Dendritic cell treated with granulocyte-macrophage colony-stimulating factor and Interleukin-4, amounts not matched to agents 40 ng/mL and 50 ng/mL, for 4 days (primary cell): ENCODE measurements at regions of chr3 and their contacts with region 1.

Region 1: DNA sequence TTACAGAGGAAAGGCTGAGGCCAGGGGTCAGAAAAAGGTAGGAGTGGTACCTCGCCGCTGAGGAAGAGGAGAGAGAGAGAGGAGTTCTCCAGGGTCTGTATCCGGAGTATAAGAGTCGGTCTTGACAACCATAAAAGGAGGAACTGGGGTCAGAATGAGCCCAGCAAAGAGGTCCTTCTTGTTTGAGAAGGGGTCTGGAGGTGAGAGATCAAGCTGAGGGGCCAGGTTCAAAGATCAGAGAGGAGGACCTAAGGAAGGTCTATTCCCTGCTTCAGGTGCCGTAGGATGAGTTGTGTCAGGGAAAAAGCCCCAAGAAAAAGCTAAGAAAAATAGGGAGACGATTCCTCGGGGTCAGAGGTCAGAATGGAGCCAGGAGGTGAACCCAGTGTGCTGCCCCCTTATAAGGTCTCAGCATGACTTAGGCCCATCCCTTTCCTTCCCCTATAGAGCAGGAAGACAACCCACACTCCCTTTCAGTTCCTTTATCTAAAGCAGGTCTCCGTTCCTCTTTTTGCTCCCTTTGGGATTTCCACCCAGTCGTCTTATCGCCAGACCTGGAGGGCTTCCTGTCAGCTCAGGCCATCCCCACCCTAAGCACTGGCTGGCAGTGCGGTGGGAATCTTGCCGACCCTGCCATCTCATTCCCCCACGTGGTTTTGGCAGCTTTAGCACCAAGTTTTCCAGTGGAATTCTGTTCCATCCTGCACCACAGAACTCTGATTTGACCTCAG is 651 bp downstream of the MTMR14 start:
- H3K4me3 Mint-ChIP-seq: peak overlapping the region; percentile 98
- H3K27ac Mint-ChIP-seq: peak overlapping the region; percentile 94
- H3K4me1 Mint-ChIP-seq: peaks cover 49% of the 10 kb centered on the region
- H3K27me3 Mint-ChIP-seq: peaks cover 2% of the 10 kb centered on the region

Region 2: GRCh38 chr3:9362731-9363530 is 287.0 kb before region 1 on chr3 and contains the start of gene THUMPD3:
- intact Hi-C with region 1: loop called (anchors 10 kb)
- H3K4me3 Mint-ChIP-seq: peak within 1 kb of the TSS; percentile 97
- H3K27ac Mint-ChIP-seq: peak within 1 kb of the TSS; percentile 99
- H3K4me1 Mint-ChIP-seq: peaks cover 6% of the 10 kb centered on the region
- H3K27me3 Mint-ChIP-seq: peaks cover 5% of the 10 kb centered on the region

Region 3: DNA sequence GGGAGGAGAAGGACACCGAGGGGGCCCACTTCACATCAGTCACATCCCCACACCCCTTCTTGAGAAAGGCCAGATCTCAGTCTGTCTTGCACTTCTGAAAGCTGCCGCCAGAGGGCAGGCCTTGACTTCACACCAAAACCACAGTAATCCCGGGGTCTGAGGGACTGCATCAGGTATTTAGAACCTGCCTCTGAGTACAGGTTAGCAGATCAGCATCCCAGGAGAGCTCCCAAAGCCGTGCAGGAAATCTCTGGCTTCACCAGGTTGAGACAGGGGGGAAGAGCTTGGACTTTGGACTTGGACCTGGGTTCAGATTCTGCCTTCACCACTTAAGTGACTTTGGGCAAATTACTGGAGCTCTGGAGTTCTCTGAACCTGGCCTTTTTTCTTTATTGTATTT is 146.7 kb before region 1 on chr3:
- intact Hi-C with region 1: loop called (anchors 5 kb)
- H3K4me3 Mint-ChIP-seq: no peak overlapping the region
- H3K27ac Mint-ChIP-seq: no peak overlapping the region
- H3K4me1 Mint-ChIP-seq: peaks cover 16% of the 10 kb centered on the region
- H3K27me3 Mint-ChIP-seq: peaks cover 47% of the 10 kb centered on the region

Region 4: DNA sequence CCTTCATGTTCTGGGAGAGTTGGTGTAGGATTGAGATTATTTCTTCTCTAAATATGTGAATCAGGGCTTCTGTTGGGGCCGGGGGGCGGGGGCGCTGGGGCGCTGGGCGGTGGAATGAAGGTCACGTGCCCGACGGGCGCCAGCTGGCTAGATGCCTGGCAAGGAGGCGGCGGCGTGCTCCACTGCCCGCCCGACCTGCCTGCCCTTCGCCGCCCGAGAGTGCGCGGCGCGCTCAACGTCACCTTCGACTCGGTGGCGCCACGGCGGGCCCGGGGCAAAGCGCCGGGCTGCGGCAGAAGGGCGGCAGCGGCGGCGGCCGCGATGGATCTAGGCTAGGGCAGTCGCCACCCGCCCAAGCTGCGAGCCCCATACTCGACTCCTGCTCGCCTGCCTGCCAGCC is 49.4 kb before region 1 on chr3:
- intact Hi-C with region 1: no loop called
- H3K4me3 Mint-ChIP-seq: peak overlapping the region; percentile 4
- H3K27ac Mint-ChIP-seq: no peak overlapping the region
- H3K4me1 Mint-ChIP-seq: no peaks in the 10 kb centered on the region
- H3K27me3 Mint-ChIP-seq: peaks cover 57% of the 10 kb centered on the region

Region 5: GRCh38 chr3:9946112-9947024 is 296.4 kb after region 1 on chr3:
- intact Hi-C with region 1: no loop called
- H3K4me3 Mint-ChIP-seq: peak overlapping the region; percentile 81
- H3K27ac Mint-ChIP-seq: peak overlapping the region; percentile 88
- H3K4me1 Mint-ChIP-seq: peaks cover 11% of the 10 kb centered on the region
- H3K27me3 Mint-ChIP-seq: peaks cover 13% of the 10 kb centered on the region